Naive thymus-derived CD4-positive, alpha-beta T cell (primary cell): ENCODE measurements at regions of chr19 and their contacts with region 1.

Region 1: GRCh38 chr19:34677386-34678084 is at the start of gene ZNF302:
- DNase-seq: peak; percentile 87 to 96 (median 94)
- ATAC-seq: peak; percentile 95
- H3K4me3 ChIP-seq: peak within 1 kb of the TSS; percentile 93
- H3K4me3 Mint-ChIP-seq: peak within 1 kb of the TSS; percentile 92 to 99 (median 96)
- H3K27ac ChIP-seq: peak within 1 kb of the TSS; percentile 80
- H3K27ac Mint-ChIP-seq: peak within 1 kb of the TSS; percentile 94 to 100 (median 99)
- H3K4me1 ChIP-seq: peaks cover 14 to 15% of the 10 kb centered on the region in 2 donors
- H3K4me1 Mint-ChIP-seq: peaks cover 20 to 56% (median 35%) of the 10 kb centered on the region in 7 donors
- H3K27me3 ChIP-seq: no peaks in the 10 kb centered on the region
- H3K27me3 Mint-ChIP-seq: peaks cover 9 to 18% (median 12%) of the 10 kb centered on the region in 5 donors
- total RNA-seq, gene ZNF302: 13.6 to 61.4 (median 25.7) TPM

Region 2: DNA sequence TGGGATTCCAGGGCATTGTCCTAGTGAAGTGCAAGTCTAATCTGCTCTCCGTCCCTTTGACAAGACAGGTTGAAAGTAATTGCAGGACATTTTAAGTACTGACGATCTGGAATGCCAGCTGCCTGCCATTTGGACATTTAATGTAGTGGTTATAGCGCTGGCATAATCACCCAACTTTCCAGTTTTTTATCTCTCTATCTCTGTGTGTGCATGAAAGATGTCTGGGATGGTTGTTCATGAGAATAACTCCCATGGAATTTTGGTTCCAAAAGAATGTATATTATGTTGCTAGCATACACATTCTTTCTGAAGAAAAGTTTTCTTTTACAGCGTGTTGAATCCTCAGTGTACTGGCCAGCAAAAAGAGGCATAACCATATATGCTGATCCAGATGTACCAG is 1904.4 kb before region 1 on chr19:
- CTCF ChIA-PET with region 1: no interaction called
- POLR2A ChIA-PET with region 1: no interaction called
- intact Hi-C with region 1: no loop called
- DNase-seq: no peak
- ATAC-seq: no peak
- H3K4me3 ChIP-seq: no peak overlapping the region
- H3K4me3 Mint-ChIP-seq: no peak overlapping the region
- H3K27ac ChIP-seq: no peak overlapping the region
- H3K27ac Mint-ChIP-seq: no peak overlapping the region
- H3K4me1 ChIP-seq: no peaks in the 10 kb centered on the region
- H3K4me1 Mint-ChIP-seq: no peaks in the 10 kb centered on the region
- H3K27me3 ChIP-seq: no peaks in the 10 kb centered on the region
- H3K27me3 Mint-ChIP-seq: peaks cover 0 to 10% (median 4%) of the 10 kb centered on the region in 5 donors

Region 3: DNA sequence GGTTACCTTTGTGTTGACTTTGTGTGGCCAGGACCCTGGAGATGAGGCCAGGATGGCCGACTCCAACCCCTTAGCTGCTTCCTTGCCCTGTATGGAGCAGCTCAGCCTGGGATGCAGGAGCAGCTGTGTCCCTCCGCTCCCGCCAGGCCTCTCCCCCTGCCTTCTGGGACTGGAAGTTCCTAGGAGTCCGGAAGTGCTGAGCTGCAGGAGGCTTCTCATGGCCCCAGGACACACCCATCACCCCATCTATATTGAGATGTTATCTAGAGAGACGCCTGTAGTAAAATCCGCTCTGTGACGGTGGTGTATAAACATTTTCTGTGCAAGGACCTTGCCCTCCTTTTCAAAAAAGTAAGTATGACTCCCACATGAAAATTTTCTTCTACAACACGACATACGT is 169.0 kb before region 1 on chr19:
- CTCF ChIA-PET with region 1: no interaction called
- POLR2A ChIA-PET with region 1: no interaction called
- intact Hi-C with region 1: no loop called
- DNase-seq: no peak
- ATAC-seq: no peak
- H3K4me3 ChIP-seq: no peak overlapping the region
- H3K4me3 Mint-ChIP-seq: no peak overlapping the region
- H3K27ac ChIP-seq: no peak overlapping the region
- H3K27ac Mint-ChIP-seq: no peak overlapping the region
- H3K4me1 ChIP-seq: no peaks in the 10 kb centered on the region
- H3K4me1 Mint-ChIP-seq: peaks cover 0 to 1% (median 0%) of the 10 kb centered on the region in 7 donors
- H3K27me3 ChIP-seq: no peaks in the 10 kb centered on the region
- H3K27me3 Mint-ChIP-seq: peaks cover 2 to 39% (median 8%) of the 10 kb centered on the region in 5 donors

Region 4: DNA sequence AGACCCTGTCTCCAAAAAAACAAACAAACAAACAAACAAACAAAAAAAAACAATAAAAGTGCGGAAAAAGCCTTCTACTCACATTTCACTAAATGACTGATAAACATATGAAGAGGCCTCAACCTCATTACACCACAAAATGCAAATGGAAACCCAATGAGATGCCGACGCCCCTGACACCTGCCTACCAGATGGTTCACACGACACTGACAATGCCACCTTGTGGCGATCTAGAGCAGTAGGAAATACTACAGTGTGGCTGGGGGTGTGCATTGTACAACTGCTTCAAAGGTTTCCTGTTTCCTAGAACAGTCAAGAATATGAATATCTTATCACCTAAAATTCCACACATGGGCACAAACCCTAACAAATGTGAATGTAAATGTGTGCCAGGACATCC is 14.6 kb before region 1 on chr19:
- CTCF ChIA-PET with region 1: interaction called, 3 read pairs
- POLR2A ChIA-PET with region 1: interaction called, 3 read pairs
- intact Hi-C with region 1: loop called in 1 of 2 experiments (anchors 1 kb)
- DNase-seq: peak in 7 of 9 donors; percentile 44 to 69 (median 54)
- ATAC-seq: peak; percentile 95
- H3K4me3 ChIP-seq: no peak overlapping the region
- H3K4me3 Mint-ChIP-seq: peak overlapping the region in 4 of 10 donors; percentile 0 to 50 (median 14)
- H3K27ac ChIP-seq: no peak overlapping the region
- H3K27ac Mint-ChIP-seq: peak overlapping the region in 7 of 9 donors; percentile 6 to 65 (median 30)
- H3K4me1 ChIP-seq: peaks cover 6% of the 10 kb centered on the region in 2 donors
- H3K4me1 Mint-ChIP-seq: peaks cover 11 to 34% (median 22%) of the 10 kb centered on the region in 7 donors
- H3K27me3 ChIP-seq: no peaks in the 10 kb centered on the region
- H3K27me3 Mint-ChIP-seq: peaks cover 0 to 7% (median 0%) of the 10 kb centered on the region in 5 donors

Region 5: DNA sequence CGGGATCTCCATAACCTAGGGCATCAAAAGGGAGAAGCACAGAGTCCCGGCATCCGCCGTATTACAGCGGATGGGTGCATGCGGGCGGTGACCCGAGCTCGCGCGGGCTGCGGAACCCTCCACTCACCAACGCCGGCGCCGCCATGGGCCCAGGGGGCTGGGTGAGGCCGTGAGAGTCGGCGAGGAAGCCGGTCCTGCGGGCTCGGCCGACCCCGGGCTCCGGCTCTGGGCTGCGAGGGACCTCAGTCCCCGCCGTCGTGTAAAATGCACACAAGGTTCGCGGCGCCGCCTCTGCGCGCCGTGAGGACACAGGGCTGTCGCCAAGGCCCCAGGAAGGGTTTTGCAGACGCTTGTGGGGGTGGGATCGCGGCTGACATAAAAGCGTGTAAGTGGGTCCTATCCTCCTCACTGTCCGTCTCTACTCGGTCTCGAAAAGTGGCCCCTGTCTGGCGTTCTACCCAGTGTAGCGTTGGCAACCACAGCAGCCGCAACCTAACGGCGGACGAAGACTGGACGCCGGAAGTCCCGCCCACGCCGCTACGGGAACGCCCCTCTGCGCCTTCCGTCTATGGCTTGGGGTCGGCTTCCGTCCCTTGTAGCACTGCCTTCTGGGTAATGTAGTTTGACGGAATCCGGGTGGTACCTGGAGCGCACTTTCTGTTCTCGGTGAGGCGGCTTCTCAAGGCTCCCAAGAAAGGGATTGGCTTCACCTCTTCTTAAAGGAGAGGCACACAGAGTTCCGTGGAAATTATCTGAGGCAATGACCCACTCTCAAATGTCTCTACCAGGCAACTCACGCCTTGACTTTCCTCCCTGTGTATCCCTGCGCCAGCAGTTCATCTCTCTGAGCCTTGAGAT is 95.4 kb after region 1 on chr19 and contains the start of gene ZNF599:
- CTCF ChIA-PET with region 1: no interaction called
- POLR2A ChIA-PET with region 1: interaction called, 3 read pairs
- intact Hi-C with region 1: loop called (anchors 1 kb)
- DNase-seq: peak; percentile 72 to 89 (median 87)
- ATAC-seq: peak; percentile 99
- H3K4me3 ChIP-seq: peak within 1 kb of the TSS; percentile 88
- H3K4me3 Mint-ChIP-seq: peak within 1 kb of the TSS; percentile 92 to 99 (median 96)
- H3K27ac ChIP-seq: peak within 1 kb of the TSS; percentile 81
- H3K27ac Mint-ChIP-seq: peak within 1 kb of the TSS; percentile 84 to 97 (median 95)
- H3K4me1 ChIP-seq: peaks cover 7 to 10% of the 10 kb centered on the region in 2 donors
- H3K4me1 Mint-ChIP-seq: peaks cover 13 to 21% (median 20%) of the 10 kb centered on the region in 7 donors
- H3K27me3 ChIP-seq: no peaks in the 10 kb centered on the region
- H3K27me3 Mint-ChIP-seq: peaks cover 0 to 15% (median 5%) of the 10 kb centered on the region in 5 donors
- total RNA-seq, gene ZNF599: 2.9 to 11.6 (median 5.3) TPM

Region 6: GRCh38 chr19:34926685-34927375 is 249.3 kb after region 1 on chr19 and contains the start of gene ZNF30:
- CTCF ChIA-PET with region 1: no interaction called
- POLR2A ChIA-PET with region 1: no interaction called
- intact Hi-C with region 1: loop called in 1 of 2 experiments (anchors 2 kb)
- DNase-seq: peak; percentile 57 to 78 (median 74)
- ATAC-seq: peak; percentile 95
- H3K4me3 ChIP-seq: peak within 1 kb of the TSS; percentile 76
- H3K4me3 Mint-ChIP-seq: peak within 1 kb of the TSS; percentile 84 to 95 (median 92)
- H3K27ac ChIP-seq: peak within 1 kb of the TSS; percentile 61
- H3K27ac Mint-ChIP-seq: peak within 1 kb of the TSS; percentile 49 to 84 (median 72)
- H3K4me1 ChIP-seq: peaks cover 0 to 5% of the 10 kb centered on the region in 2 donors
- H3K4me1 Mint-ChIP-seq: peaks cover 10 to 34% (median 23%) of the 10 kb centered on the region in 7 donors
- H3K27me3 ChIP-seq: no peaks in the 10 kb centered on the region
- H3K27me3 Mint-ChIP-seq: peaks cover 0 to 6% (median 0%) of the 10 kb centered on the region in 5 donors
- total RNA-seq, gene ZNF30: 2.0 to 13.1 (median 3.5) TPM